Activated B cell treated with CpG ODN at 0.5 μM for 24 hours (primary cell): ENCODE measurements at regions of chrX and their contacts with region 1.

Region 1: DNA sequence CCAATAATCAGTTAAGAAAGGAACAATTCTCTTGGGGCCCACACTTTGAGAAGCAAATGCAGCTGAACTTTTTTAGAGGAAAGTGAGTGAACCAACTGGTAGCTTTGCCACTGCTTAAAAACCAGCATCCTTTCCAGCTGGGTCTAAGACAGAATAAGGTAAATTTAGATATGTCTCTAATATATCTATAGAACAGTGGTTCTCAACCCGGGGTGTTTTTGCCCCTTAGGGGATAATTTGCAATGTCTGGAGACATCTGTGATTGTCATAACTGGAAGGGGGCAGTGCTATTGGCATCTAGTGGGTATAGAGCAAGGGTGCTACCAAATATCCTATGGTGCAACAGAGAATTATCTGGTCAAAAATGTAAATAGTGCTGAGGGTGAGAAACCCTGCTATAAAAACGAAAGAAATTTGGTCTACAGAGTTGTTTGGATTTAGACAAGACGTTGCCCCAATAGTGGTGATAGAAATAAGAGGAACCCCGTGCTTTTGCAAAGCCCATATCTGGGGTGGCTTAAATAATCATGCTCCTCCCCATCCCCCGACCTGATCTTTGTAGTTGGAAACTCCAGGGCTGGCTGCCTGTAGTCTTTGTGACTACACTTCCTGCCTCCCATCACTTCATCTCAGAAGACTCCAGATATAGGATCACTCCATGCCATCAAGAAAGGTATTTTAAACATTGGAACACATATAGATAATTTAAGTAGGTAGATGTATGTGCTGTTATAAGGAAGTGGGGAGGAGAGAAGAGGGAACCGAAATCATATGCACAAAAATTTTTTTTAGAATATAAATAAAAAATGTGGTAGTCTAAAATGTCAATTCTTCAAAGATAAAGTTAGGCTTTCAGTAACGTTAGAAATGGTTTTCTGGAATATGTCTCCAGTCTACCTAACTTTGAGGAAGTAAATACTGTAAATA is at the start of gene TLR7:
- DNase-seq: no peak
- ATAC-seq: peak; percentile 51
- H3K4me3 Mint-ChIP-seq: peak within 1 kb of the TSS; percentile 84
- H3K27ac Mint-ChIP-seq: peak within 1 kb of the TSS; percentile 95
- H3K4me1 Mint-ChIP-seq: peaks cover 57% of the 10 kb centered on the region
- H3K27me3 Mint-ChIP-seq: no peaks in the 10 kb centered on the region
- CTCF ChIP-seq: no peak
- total RNA-seq, gene TLR7: 4.6 and 5.4 TPM in 2 replicates

Region 2: GRCh38 chrX:12843668-12844279 is 22.9 kb before region 1 on chrX:
- CTCF ChIA-PET with region 1: no interaction called
- POLR2A ChIA-PET with region 1: no interaction called
- intact Hi-C with region 1: loop called (anchors 1 kb)
- DNase-seq: no peak
- ATAC-seq: peak; percentile 72
- H3K4me3 Mint-ChIP-seq: peak overlapping the region; percentile 64
- H3K27ac Mint-ChIP-seq: peak overlapping the region; percentile 88
- H3K4me1 Mint-ChIP-seq: peaks cover 18% of the 10 kb centered on the region
- H3K27me3 Mint-ChIP-seq: no peaks in the 10 kb centered on the region
- CTCF ChIP-seq: no peak